ENCODE measurements at regions of chr11 and their contacts with region 1.

Region 1: GRCh38 chr11:121810291-121810690 is 305.7 kb downstream of the BLID start:
- DNase-seq: no peak
- H3K4me3 ChIP-seq: no peak overlapping the region
- H3K27ac ChIP-seq: no peak overlapping the region
- H3K4me1 ChIP-seq: no peaks in the 10 kb centered on the region
- H3K27me3 ChIP-seq: no peaks in the 10 kb centered on the region
- CTCF ChIP-seq: no peak
- POLR2A ChIP-seq: no peak

Region 2: DNA sequence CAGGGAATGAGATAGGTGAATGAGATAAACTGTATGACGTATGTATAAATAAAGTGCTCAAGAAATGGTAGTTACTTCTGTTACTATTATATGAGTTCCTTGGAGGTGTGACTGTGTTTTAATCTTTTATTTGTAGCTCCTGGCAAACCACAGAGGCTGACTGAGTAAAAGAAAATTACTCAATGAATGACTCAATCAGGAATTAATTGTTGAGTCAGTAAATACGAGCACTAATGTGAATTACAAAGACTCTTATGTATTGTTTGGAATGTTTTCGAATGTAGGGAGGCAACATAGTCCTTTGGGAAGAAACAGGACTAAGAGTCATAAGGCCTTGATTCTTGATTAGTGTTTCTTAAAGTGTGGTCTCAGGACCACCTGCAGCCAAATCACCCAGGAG is 356.8 kb after region 1 on chr11:
- intact Hi-C with region 1: loop called (anchors 10 kb)
- DNase-seq: no peak
- H3K4me3 ChIP-seq: no peak overlapping the region
- H3K27ac ChIP-seq: no peak overlapping the region
- H3K4me1 ChIP-seq: no peaks in the 10 kb centered on the region
- H3K27me3 ChIP-seq: no peaks in the 10 kb centered on the region
- CTCF ChIP-seq: no peak
- POLR2A ChIP-seq: no peak